Spleen (tissue), 13 donors: ENCODE measurements at regions of chr10 and their contacts with region 1.

Region 1: DNA sequence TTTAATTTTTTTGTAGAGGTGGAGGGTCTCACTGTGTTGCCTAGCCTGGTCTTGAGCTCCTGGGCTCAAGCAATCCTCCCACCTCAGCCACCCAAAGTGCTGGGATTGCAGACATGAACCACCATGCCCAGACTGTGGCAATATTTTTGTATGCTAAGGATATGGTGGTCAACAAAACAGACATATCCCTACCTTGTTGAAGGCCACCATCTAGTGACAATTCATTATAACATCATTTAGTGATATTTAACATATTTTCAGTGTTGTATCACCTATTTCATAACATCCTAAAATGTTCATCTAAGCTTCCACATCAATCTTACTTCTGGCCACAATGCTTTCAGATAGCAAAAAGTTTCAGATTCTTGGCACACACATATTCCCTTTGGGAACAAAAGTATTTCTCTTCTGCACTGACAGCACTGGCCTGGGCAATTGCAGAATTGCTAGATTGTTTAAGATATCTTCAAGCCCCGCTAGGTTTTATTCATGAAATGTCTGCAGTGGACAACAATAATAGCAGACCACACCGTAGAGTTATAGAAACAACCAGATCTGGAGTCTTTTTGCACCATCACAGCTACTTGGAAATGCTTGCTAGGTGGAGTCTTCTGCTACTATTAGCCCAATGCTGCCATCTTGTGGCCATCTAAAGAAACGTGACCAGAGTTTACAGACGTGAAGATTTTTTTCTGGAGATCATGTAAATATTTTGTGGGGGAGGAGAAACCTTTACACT is 58.4 kb downstream of the DNAJC12 start:
- DNase-seq: no peak
- H3K4me3 ChIP-seq: no peak overlapping the region
- H3K27ac ChIP-seq: no peak overlapping the region
- H3K4me1 ChIP-seq: peaks cover 0 to 27% (median 15%) of the 10 kb centered on the region in 6 donors
- H3K27me3 ChIP-seq: no peaks in the 10 kb centered on the region
- CTCF ChIP-seq: peak; percentile 50 to 89 (median 79)
- POLR2A ChIP-seq: no peak

Region 2: GRCh38 chr10:67666416-67667034 is 113.1 kb before region 1 on chr10:
- intact Hi-C with region 1: loop called (anchors 10 kb)
- DNase-seq: no peak
- H3K4me3 ChIP-seq: no peak overlapping the region
- H3K27ac ChIP-seq: no peak overlapping the region
- H3K4me1 ChIP-seq: no peaks in the 10 kb centered on the region
- H3K27me3 ChIP-seq: no peaks in the 10 kb centered on the region
- CTCF ChIP-seq: peak in 10 of 11 experiments; percentile 8 to 58 (median 46)
- POLR2A ChIP-seq: no peak

Region 3: DNA sequence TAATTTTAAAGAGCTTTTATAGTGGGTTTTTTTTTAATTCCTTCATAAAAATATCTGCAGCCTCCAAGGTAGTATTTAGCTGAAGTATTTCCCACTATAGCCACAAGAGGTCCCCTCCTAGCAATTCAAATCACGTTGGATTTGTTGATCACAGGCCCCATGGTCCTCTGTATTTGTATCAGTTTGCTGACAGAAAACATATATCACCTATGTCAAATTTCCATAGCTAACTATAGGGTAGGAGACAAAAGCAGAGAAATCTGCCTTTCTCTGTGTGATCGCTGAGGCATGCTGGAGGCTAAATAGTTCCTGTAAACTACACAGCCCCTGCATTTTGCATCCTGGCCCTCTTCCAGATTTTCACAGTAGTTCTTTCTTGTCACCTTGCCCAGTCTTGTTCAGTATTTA is 81.9 kb before region 1 on chr10:
- intact Hi-C with region 1: loop called (anchors 2 kb)
- DNase-seq: no peak
- H3K4me3 ChIP-seq: no peak overlapping the region
- H3K27ac ChIP-seq: no peak overlapping the region
- H3K4me1 ChIP-seq: peaks cover 0 to 7% (median 2%) of the 10 kb centered on the region in 6 donors
- H3K27me3 ChIP-seq: peaks cover 0 to 10% (median 0%) of the 10 kb centered on the region in 7 donors
- CTCF ChIP-seq: peak in 10 of 11 experiments; percentile 24 to 72 (median 60)
- POLR2A ChIP-seq: no peak